ENCODE measurements at regions of chr22 and their contacts with region 1.

Region 1: DNA sequence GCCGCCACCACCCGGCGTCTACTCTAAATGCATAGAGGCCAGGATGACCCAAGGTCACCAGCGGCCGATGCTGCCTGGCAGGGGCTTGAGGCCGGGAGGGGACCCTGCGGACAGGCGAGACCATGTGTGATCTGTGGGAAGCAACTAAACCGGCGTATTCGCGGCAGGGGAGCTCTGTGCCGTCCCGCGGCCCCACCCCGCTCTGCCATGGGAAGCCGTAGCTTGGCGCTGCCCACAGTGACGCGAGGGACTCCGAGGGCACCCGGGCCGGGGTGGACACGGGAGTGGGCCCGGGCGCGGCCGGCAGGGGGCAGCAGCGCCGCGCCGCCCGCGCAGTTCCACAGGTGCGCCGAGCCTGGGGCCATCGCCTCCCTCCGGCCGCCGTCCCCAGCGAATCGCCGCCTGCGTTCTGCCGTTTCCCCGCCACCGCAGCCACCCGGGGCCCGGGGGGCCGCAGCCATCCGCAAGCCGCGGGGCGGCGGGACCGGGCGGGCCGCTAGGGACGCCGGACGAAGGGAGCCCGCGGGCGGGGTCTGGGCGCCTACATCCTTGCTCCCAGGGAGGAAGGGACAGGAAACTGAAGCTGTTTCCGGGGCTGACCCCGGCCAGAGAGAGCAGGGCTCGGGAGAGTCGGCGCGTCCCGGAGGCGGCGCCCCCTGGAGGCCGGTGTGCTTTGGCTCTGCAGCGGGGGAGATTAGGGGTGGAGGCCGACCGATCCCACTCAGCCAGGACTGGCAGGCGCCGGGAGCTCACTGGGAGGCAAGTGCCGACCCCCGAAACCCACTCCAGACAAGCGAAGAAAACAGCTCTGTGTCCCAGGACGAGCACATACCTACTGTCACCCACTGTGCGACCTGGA is 12.5 kb upstream of the HDHD5 start:
- DNase-seq: peak; percentile 84
- ATAC-seq: peak; percentile 96
- H3K4me3 Mint-ChIP-seq: peak overlapping the region; percentile 78
- H3K27ac Mint-ChIP-seq: peak overlapping the region; percentile 71
- H3K4me1 Mint-ChIP-seq: peaks cover 13% of the 10 kb centered on the region
- H3K27me3 Mint-ChIP-seq: no peaks in the 10 kb centered on the region

Region 2: GRCh38 chr22:17087498-17088131 is 83.9 kb before region 1 on chr22:
- CTCF ChIA-PET with region 1: interaction called, 15 read pairs
- POLR2A ChIA-PET with region 1: interaction called, 3 read pairs
- DNase-seq: peak; percentile 82
- ATAC-seq: peak; percentile 9
- H3K4me3 Mint-ChIP-seq: peak overlapping the region; percentile 80
- H3K27ac Mint-ChIP-seq: peak overlapping the region; percentile 86
- H3K4me1 Mint-ChIP-seq: peaks cover 71% of the 10 kb centered on the region
- H3K27me3 Mint-ChIP-seq: peaks cover 4% of the 10 kb centered on the region

Region 3: DNA sequence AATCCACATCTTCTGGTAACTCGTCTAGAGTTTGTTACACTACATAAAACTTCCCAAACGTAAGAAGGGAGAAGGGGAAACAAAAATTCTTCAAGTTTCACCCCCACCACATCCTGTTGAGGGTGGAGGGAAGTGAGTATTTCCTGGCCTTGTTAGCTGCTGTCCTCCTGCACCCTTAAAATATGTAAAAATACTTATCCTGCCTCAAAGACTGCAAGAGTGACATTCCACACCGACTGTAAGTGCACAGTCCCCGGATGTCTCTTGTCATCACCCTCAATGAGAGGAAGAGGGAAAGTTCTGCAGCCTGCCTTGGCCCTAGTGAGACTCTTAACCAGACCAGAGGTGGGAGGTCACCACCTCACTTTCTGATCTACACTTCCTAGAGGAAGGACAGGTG is 53.7 kb before region 1 on chr22:
- CTCF ChIA-PET with region 1: interaction called, 24 read pairs
- POLR2A ChIA-PET with region 1: no interaction called
- DNase-seq: peak; percentile 41
- ATAC-seq: peak; percentile 32
- H3K4me3 Mint-ChIP-seq: peak overlapping the region; percentile 42
- H3K27ac Mint-ChIP-seq: peak overlapping the region; percentile 83
- H3K4me1 Mint-ChIP-seq: peaks cover 56% of the 10 kb centered on the region
- H3K27me3 Mint-ChIP-seq: peaks cover 24% of the 10 kb centered on the region

Region 4: DNA sequence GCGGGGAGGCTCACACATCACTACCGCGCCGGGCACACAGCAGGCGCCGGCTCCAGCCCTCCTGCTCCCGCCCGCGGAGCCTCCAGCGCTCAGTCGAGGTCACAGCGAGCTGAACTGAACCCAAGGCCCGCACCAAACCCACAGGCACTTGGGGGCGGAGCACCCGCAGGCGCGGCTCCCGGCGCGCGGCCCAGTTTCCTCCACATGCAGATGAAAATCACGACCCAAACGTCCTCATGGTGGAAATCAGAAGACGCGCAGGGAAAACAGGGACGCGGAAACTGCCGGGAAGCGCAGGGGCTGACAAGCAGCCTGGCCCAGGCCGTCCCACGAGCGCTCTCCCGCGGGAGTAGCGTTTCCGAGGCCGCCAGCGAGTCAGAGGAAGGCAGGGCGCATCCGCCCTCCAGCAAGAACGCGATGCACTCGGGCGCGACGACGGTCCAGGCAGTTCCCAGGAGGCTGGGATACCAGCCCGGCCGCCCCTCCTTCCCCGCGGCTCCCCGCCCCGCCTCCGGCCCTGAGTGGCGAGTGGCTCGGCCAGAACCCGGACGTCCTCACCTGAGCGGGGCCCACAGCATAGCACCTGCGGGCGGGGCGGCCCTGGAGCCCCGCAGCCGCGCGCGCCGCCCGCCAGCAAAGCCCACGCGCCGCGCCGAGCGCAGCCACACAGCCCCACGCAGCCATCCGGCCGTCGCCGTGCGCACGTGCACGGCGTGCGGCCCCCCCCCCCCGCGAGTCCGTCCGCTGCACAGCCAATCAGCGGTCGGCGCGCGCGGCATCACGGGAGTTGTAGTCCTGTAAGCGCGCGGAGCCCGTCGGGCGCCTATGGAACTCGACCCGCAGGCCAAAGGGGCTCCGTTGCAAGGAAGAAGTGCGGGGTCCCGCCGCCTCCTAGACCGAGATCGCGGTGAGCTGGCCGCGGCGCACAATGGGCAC is 12.7 kb before region 1 on chr22 and contains the start of gene HDHD5:
- CTCF ChIA-PET with region 1: interaction called, 44 read pairs
- POLR2A ChIA-PET with region 1: interaction called, 3 read pairs
- DNase-seq: peak; percentile 91
- ATAC-seq: peak; percentile 89
- H3K4me3 Mint-ChIP-seq: peak within 1 kb of the TSS; percentile 81
- H3K27ac Mint-ChIP-seq: peak within 1 kb of the TSS; percentile 75
- H3K4me1 Mint-ChIP-seq: peaks cover 31% of the 10 kb centered on the region
- H3K27me3 Mint-ChIP-seq: no peaks in the 10 kb centered on the region
- total RNA-seq, gene HDHD5: 38.5 to 40.7 TPM

Region 5: GRCh38 chr22:17205432-17205831 is 33.9 kb after region 1 on chr22:
- CTCF ChIA-PET with region 1: interaction called, 10 read pairs
- POLR2A ChIA-PET with region 1: no interaction called
- DNase-seq: no peak
- ATAC-seq: no peak
- H3K4me3 Mint-ChIP-seq: no peak overlapping the region
- H3K27ac Mint-ChIP-seq: no peak overlapping the region
- H3K4me1 Mint-ChIP-seq: no peaks in the 10 kb centered on the region
- H3K27me3 Mint-ChIP-seq: no peaks in the 10 kb centered on the region

Region 6: GRCh38 chr22:17237038-17237668 is 65.6 kb after region 1 on chr22:
- CTCF ChIA-PET with region 1: interaction called, 10 read pairs
- POLR2A ChIA-PET with region 1: interaction called, 9 read pairs
- DNase-seq: peak; percentile 65
- ATAC-seq: peak; percentile 93
- H3K4me3 Mint-ChIP-seq: peak overlapping the region; percentile 72
- H3K27ac Mint-ChIP-seq: peak overlapping the region; percentile 94
- H3K4me1 Mint-ChIP-seq: peaks cover 22% of the 10 kb centered on the region
- H3K27me3 Mint-ChIP-seq: no peaks in the 10 kb centered on the region